Colonic mucosa (tissue), 4 donors: ENCODE measurements at regions of chr3 and their contacts with region 1.

Region 1: GRCh38 chr3:134299185-134299887 is 48.7 kb upstream of the RYK start:
- DNase-seq: no peak
- H3K4me3 ChIP-seq: no peak overlapping the region
- H3K27ac ChIP-seq: peak overlapping the region; percentile 36
- H3K4me1 ChIP-seq: no peaks in the 10 kb centered on the region
- H3K27me3 ChIP-seq: no peaks in the 10 kb centered on the region
- CTCF ChIP-seq: peak; percentile 12

Region 2: DNA sequence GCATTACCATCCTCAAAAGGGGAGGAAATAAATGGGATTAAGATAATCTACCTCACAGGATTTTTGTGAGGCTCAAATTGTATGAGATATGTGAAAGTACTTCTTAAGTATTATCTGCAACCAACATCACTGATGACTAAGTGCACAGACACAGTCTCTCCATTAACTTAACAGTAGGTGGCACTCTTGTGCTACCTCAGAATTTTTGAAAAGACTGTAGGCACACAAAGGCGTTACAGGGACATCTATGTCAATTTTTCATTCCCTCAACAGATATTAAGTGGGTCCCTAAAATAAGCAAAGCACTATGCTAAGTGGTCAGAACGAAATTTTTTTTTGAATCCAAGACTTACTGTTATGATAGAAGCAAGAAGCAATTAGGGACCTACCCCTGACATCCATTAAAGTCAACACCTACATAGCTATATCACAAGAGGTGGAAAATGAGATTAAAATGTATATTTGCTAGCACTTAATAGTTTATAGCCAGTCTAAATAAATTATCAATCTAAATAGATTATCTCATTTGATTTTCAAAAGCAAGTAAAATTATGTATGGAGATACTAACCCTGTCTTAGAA is 101.6 kb before region 1 on chr3:
- intact Hi-C with region 1: loop called (anchors 5 kb)
- DNase-seq: no peak
- H3K4me3 ChIP-seq: no peak overlapping the region
- H3K27ac ChIP-seq: no peak overlapping the region
- H3K4me1 ChIP-seq: no peaks in the 10 kb centered on the region
- H3K27me3 ChIP-seq: no peaks in the 10 kb centered on the region
- CTCF ChIP-seq: peak; percentile 62

Region 3: GRCh38 chr3:134212906-134213665 is 86.2 kb before region 1 on chr3:
- intact Hi-C with region 1: loop called (anchors 5 kb)
- DNase-seq: peak; percentile 92
- H3K4me3 ChIP-seq: no peak overlapping the region
- H3K27ac ChIP-seq: no peak overlapping the region
- H3K4me1 ChIP-seq: no peaks in the 10 kb centered on the region
- H3K27me3 ChIP-seq: no peaks in the 10 kb centered on the region
- CTCF ChIP-seq: peak; percentile 93

Region 4: DNA sequence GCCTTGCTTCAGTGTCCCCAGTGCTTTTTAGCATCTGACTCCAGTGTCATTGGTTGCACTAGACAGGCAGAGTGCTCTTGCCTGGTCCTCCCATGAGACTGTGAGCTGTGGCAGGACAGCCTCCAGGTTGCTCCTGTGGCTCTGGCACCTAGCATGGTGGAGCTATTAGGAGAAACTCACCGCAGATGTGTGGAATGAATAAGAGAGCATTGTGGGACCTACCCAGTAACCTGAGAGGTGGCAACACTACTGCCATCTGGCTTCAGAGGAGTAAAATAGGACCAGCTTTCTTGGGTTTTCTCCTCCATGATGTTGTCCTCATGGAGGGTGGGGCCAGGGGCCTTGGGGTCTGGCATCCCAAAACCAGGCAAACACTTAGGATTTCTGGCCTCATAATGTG is 679.3 kb after region 1 on chr3:
- intact Hi-C with region 1: no loop called
- DNase-seq: no peak
- H3K4me3 ChIP-seq: no peak overlapping the region
- H3K27ac ChIP-seq: no peak overlapping the region
- H3K4me1 ChIP-seq: no peaks in the 10 kb centered on the region
- H3K27me3 ChIP-seq: no peaks in the 10 kb centered on the region
- CTCF ChIP-seq: no peak